ENCODE measurements at regions of chr12 and their contacts with region 1.

Region 1: GRCh38 chr12:131608740-131609690 is 101.9 kb upstream of the SFSWAP start:
- DNase-seq: peak; percentile 78
- H3K4me3 Mint-ChIP-seq: no peak overlapping the region
- H3K27ac Mint-ChIP-seq: peak overlapping the region; percentile 10
- H3K4me1 Mint-ChIP-seq: peaks cover 56% of the 10 kb centered on the region
- H3K27me3 Mint-ChIP-seq: no peaks in the 10 kb centered on the region

Region 2: GRCh38 chr12:131471271-131471905 is 137.6 kb before region 1 on chr12:
- CTCF ChIA-PET with region 1: no interaction called
- POLR2A ChIA-PET with region 1: no interaction called
- intact Hi-C with region 1: no loop called
- DNase-seq: no peak
- H3K4me3 Mint-ChIP-seq: no peak overlapping the region
- H3K27ac Mint-ChIP-seq: no peak overlapping the region
- H3K4me1 Mint-ChIP-seq: no peaks in the 10 kb centered on the region
- H3K27me3 Mint-ChIP-seq: peaks cover 2% of the 10 kb centered on the region

Region 3: GRCh38 chr12:131511391-131511802 is 97.6 kb before region 1 on chr12:
- CTCF ChIA-PET with region 1: no interaction called
- POLR2A ChIA-PET with region 1: no interaction called
- intact Hi-C with region 1: loop called (anchors 5 kb)
- DNase-seq: peak; percentile 75
- H3K4me3 Mint-ChIP-seq: no peak overlapping the region
- H3K27ac Mint-ChIP-seq: peak overlapping the region; percentile 46
- H3K4me1 Mint-ChIP-seq: peaks cover 16% of the 10 kb centered on the region
- H3K27me3 Mint-ChIP-seq: peaks cover 5% of the 10 kb centered on the region

Region 4: DNA sequence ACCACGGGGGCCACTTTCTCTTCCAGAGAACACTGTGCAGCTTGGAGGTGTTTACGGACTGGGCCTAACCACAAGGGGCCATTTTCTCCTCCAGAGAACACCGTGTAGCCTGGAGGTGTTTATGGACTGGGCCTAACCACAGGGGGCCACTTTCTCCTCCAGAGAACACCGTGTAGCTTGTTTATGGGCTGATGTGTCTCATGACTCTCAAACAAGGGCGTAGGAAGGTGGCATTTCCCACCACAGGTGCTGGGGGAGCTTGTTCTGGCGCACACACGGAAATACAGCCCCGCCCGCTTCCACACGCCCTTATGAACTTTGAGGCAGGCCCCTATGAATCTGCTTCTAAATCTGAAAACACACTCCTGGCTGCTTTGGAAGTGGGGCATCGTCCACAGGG is 72.7 kb before region 1 on chr12:
- CTCF ChIA-PET with region 1: no interaction called
- POLR2A ChIA-PET with region 1: no interaction called
- intact Hi-C with region 1: loop called (anchors 2 kb)
- DNase-seq: peak; percentile 71
- H3K4me3 Mint-ChIP-seq: no peak overlapping the region
- H3K27ac Mint-ChIP-seq: no peak overlapping the region
- H3K4me1 Mint-ChIP-seq: peaks cover 41% of the 10 kb centered on the region
- H3K27me3 Mint-ChIP-seq: no peaks in the 10 kb centered on the region

Region 5: DNA sequence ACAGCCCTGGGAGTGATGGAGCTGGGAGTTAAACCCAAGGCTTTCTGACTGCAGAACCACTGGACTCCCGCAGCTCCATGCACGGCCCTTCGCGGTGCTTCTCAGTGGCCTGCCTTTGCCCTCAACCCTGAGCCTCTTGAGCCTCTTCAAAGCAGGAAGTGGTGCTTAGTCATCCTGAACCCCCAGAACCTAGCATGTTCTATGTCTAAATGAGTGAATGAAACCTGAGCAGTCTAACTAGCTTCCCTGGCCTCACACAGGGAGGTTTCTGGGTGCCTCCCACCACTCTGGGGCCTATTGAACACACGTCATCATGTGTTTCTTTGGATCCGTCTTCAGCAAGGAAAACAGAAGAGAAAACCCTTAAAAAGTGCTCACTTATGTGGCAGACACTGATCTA is 16.0 kb before region 1 on chr12:
- CTCF ChIA-PET with region 1: no interaction called
- POLR2A ChIA-PET with region 1: interaction called, 5 read pairs
- intact Hi-C with region 1: loop called (anchors 1 kb)
- DNase-seq: peak; percentile 72
- H3K4me3 Mint-ChIP-seq: no peak overlapping the region
- H3K27ac Mint-ChIP-seq: peak overlapping the region; percentile 71
- H3K4me1 Mint-ChIP-seq: peaks cover 16% of the 10 kb centered on the region
- H3K27me3 Mint-ChIP-seq: no peaks in the 10 kb centered on the region

Region 6: GRCh38 chr12:131710464-131711457 is 101.7 kb after region 1 on chr12 and contains the start of gene SFSWAP:
- CTCF ChIA-PET with region 1: interaction called, 3 read pairs
- POLR2A ChIA-PET with region 1: no interaction called
- intact Hi-C with region 1: loop called (anchors 1 kb)
- DNase-seq: peak; percentile 82
- H3K4me3 Mint-ChIP-seq: peak within 1 kb of the TSS; percentile 97
- H3K27ac Mint-ChIP-seq: peak within 1 kb of the TSS; percentile 96
- H3K4me1 Mint-ChIP-seq: peaks cover 27% of the 10 kb centered on the region
- H3K27me3 Mint-ChIP-seq: no peaks in the 10 kb centered on the region
- total RNA-seq, gene SFSWAP: 42.1 to 44.3 TPM

Measured in activated CD4-positive, alpha-beta memory T cell treated with anti-CD3 and anti-CD28 coated beads for 36 hours (primary cell).